Calu3 (cell line): ENCODE measurements at regions of chr19 and their contacts with region 1.

Region 1: GRCh38 chr19:46788262-46788967 is at the start of gene SLC1A5:
- DNase-seq: peak; percentile 99
- H3K4me3 Mint-ChIP-seq: peak within 1 kb of the TSS; percentile 82
- H3K27ac Mint-ChIP-seq: peak within 1 kb of the TSS; percentile 83
- H3K4me1 Mint-ChIP-seq: peaks cover 34% of the 10 kb centered on the region
- H3K27me3 Mint-ChIP-seq: no peaks in the 10 kb centered on the region
- CTCF ChIP-seq: no peak
- total RNA-seq, gene SLC1A5: 237 and 250 TPM in 2 replicates

Region 2: GRCh38 chr19:46495787-46496101 is 292.7 kb before region 1 on chr19 and contains the start of gene PNMA8B:
- CTCF ChIA-PET with region 1: interaction called, 12 read pairs
- intact Hi-C with region 1: no loop called
- DNase-seq: no peak
- H3K4me3 Mint-ChIP-seq: no peak within 1 kb of the TSS
- H3K27ac Mint-ChIP-seq: no peak within 1 kb of the TSS
- H3K4me1 Mint-ChIP-seq: peaks cover 18% of the 10 kb centered on the region
- H3K27me3 Mint-ChIP-seq: peaks cover 43% of the 10 kb centered on the region
- CTCF ChIP-seq: no peak
- total RNA-seq, gene PNMA8B: not detected in 2 replicates

Region 3: GRCh38 chr19:46753420-46754155 is 34.8 kb before region 1 on chr19:
- CTCF ChIA-PET with region 1: interaction called, 10 read pairs
- intact Hi-C with region 1: no loop called
- DNase-seq: peak; percentile 60
- H3K4me3 Mint-ChIP-seq: no peak overlapping the region
- H3K27ac Mint-ChIP-seq: peak overlapping the region; percentile 8
- H3K4me1 Mint-ChIP-seq: no peaks in the 10 kb centered on the region
- H3K27me3 Mint-ChIP-seq: no peaks in the 10 kb centered on the region
- CTCF ChIP-seq: no peak

Region 4: GRCh38 chr19:46764817-46765291 is 23.6 kb before region 1 on chr19:
- CTCF ChIA-PET with region 1: interaction called, 12 read pairs
- intact Hi-C with region 1: no loop called
- DNase-seq: peak; percentile 68
- H3K4me3 Mint-ChIP-seq: no peak overlapping the region
- H3K27ac Mint-ChIP-seq: no peak overlapping the region
- H3K4me1 Mint-ChIP-seq: peaks cover 20% of the 10 kb centered on the region
- H3K27me3 Mint-ChIP-seq: no peaks in the 10 kb centered on the region
- CTCF ChIP-seq: no peak

Region 5: DNA sequence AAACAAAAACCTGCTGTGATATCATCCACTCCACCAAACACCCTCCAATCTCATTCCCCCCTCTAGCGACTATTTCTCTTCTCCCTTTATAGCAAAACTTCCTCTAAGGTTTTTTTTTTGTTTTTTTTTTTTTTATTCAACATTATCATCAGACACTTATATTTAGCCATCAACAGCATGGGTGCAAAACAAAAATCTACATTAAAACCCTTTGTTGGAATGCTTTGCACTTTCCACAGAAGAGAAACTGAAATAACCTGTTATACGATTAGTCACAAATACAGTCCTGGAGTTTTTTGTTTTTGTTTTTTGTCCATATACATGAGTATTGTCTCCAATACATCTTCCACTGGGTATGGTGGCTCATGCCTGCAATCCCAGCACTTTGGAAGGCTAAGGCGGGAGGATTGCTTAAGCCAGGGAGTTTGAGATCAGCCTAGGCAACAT is 37.1 kb after region 1 on chr19:
- CTCF ChIA-PET with region 1: interaction called, 10 read pairs
- intact Hi-C with region 1: no loop called
- DNase-seq: no peak
- H3K4me3 Mint-ChIP-seq: no peak overlapping the region
- H3K27ac Mint-ChIP-seq: no peak overlapping the region
- H3K4me1 Mint-ChIP-seq: peaks cover 12% of the 10 kb centered on the region
- H3K27me3 Mint-ChIP-seq: no peaks in the 10 kb centered on the region
- CTCF ChIP-seq: no peak

Region 6: GRCh38 chr19:46840136-46840942 is 51.9 kb after region 1 on chr19:
- CTCF ChIA-PET with region 1: interaction called, 15 read pairs
- intact Hi-C with region 1: loop called (anchors 2 kb)
- DNase-seq: peak; percentile 60
- H3K4me3 Mint-ChIP-seq: peak overlapping the region; percentile 51
- H3K27ac Mint-ChIP-seq: peak overlapping the region; percentile 82
- H3K4me1 Mint-ChIP-seq: peaks cover 47% of the 10 kb centered on the region
- H3K27me3 Mint-ChIP-seq: no peaks in the 10 kb centered on the region
- CTCF ChIP-seq: peak; percentile 88

Region 7: DNA sequence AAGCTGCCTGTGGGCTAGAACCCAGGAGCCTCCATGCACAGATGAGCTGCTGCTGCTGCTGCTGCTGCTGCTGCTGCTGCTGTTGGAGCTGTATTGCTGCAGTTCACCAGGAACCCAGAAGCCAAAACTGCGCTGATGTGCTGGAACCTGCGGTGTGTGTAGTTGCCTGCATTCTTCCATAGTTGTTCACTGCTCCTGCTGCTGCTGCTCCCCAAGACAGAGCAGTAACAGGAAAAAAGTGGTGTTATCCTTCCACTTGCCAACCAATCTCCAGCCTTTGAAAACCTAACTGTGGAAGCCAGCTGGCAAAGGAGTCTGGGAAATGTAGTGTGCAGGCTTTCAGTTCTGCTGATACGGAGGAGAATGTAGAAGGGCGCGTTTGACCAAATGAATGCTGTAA is 110.3 kb after region 1 on chr19:
- CTCF ChIA-PET with region 1: no interaction called
- intact Hi-C with region 1: no loop called
- DNase-seq: no peak
- H3K4me3 Mint-ChIP-seq: no peak overlapping the region
- H3K27ac Mint-ChIP-seq: peak overlapping the region; percentile 19
- H3K4me1 Mint-ChIP-seq: peaks cover 65% of the 10 kb centered on the region
- H3K27me3 Mint-ChIP-seq: no peaks in the 10 kb centered on the region
- CTCF ChIP-seq: no peak